ENCODE measurements at regions of chr11 and their contacts with region 1.

Region 1: DNA sequence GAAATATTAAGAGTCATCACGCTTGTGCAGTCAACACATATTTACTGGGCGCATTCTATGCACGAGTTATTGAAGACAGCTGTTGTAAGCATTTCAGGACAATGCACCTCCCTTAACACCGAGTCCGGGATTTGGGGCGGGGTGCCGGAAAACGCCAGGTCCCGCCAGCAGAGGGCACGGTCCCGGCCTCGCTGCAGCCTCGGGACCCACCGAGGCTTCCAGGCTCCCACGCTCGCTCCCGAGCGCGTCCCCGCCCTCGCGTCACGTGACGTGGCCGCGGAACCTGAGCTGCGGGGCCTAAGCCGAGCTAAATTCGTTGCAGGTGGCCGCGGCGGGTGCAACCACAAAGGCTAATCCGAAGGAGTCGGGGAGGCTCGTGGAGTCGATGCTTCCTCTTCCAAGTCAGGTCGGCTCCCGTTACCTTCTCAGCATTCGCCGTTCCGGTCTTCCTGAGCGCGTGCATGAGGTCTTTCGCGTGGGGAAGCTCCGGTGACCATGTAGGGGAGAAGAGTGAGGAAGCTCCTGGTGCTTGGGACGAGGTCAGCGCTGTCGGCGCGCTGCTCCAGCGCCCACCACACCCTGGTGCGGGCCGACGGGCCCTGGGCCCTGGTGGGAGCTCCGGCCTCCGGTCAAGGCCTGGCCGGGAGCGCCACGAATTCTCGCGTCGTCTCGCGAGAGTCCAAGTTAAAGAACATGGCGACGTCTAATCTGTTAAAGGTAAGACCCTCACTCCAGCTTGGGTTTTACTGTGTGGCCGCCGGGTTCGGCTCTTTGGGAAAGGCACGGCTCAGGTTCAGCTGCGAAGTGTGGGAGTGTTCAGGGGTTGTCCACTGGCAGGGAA is at the start of gene CUL5:
- DNase-seq: peak; percentile 95
- ATAC-seq: peak; percentile 89
- H3K4me3 Mint-ChIP-seq: peak within 1 kb of the TSS; percentile 99
- H3K27ac Mint-ChIP-seq: peak within 1 kb of the TSS; percentile 95
- H3K4me1 Mint-ChIP-seq: peaks cover 16% of the 10 kb centered on the region
- H3K27me3 Mint-ChIP-seq: no peaks in the 10 kb centered on the region
- total RNA-seq, gene CUL5: 19.7 to 34.4 TPM

Region 2: DNA sequence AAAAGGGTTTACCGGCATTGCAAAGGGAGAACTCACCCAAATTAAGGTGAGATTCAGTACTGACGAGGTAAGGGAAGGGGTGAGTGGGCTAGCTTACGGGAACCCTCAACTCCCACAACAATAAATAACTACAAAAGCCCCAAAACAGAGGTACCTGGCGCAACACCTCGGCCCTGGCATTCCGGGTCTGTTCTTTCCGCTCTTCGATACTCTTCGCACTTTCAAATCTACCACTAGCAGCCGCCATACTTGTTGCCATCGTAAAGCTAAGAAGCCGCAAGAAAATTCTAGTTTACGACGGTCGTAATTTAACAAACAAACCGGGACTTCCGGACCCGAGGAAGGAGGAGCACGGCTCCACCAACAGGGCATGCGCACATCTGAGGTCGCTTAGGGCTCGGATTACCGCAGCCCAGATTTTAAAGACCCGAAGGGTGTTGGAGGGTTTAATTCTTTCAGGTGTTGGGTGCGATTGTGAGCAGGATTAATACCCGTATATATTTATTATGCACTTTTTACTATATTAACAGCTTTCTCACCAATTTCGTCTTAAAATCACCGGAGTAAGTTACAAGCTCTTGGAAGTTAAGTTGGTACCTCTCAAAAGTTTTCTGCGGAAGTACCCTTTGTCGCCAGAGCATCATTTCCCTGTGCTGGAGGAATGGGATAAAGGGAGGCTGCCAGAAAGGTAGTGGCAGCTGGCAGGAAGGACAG is 551.2 kb before region 1 on chr11 and contains the start of gene CWF19L2:
- CTCF ChIA-PET with region 1: no interaction called
- POLR2A ChIA-PET with region 1: no interaction called
- intact Hi-C with region 1: loop called in 1 of 2 experiments (anchors 2 kb)
- DNase-seq: peak; percentile 94
- ATAC-seq: peak; percentile 99
- H3K4me3 Mint-ChIP-seq: peak within 1 kb of the TSS; percentile 84
- H3K27ac Mint-ChIP-seq: peak within 1 kb of the TSS; percentile 95
- H3K4me1 Mint-ChIP-seq: peaks cover 21% of the 10 kb centered on the region
- H3K27me3 Mint-ChIP-seq: no peaks in the 10 kb centered on the region
- total RNA-seq, gene CWF19L2: 14.1 to 14.3 TPM

Region 3: GRCh38 chr11:107928046-107928766 is 80.7 kb before region 1 on chr11 and contains the start of gene RAB39A:
- CTCF ChIA-PET with region 1: no interaction called
- POLR2A ChIA-PET with region 1: no interaction called
- intact Hi-C with region 1: loop called in 1 of 2 experiments (anchors 1 kb)
- DNase-seq: peak; percentile 84
- ATAC-seq: peak; percentile 87
- H3K4me3 Mint-ChIP-seq: peak within 1 kb of the TSS; percentile 61
- H3K27ac Mint-ChIP-seq: no peak within 1 kb of the TSS
- H3K4me1 Mint-ChIP-seq: peaks cover 12% of the 10 kb centered on the region
- H3K27me3 Mint-ChIP-seq: peaks cover 43% of the 10 kb centered on the region
- total RNA-seq, gene RAB39A: 0.12 to 0.16 TPM

Region 4: GRCh38 chr11:108069947-108070346 is 61.1 kb after region 1 on chr11:
- CTCF ChIA-PET with region 1: interaction called, 4 read pairs
- POLR2A ChIA-PET with region 1: no interaction called
- intact Hi-C with region 1: loop called in 1 of 2 experiments (anchors 2 kb)
- DNase-seq: no peak
- ATAC-seq: peak; percentile 90
- H3K4me3 Mint-ChIP-seq: no peak overlapping the region
- H3K27ac Mint-ChIP-seq: no peak overlapping the region
- H3K4me1 Mint-ChIP-seq: peaks cover 18% of the 10 kb centered on the region
- H3K27me3 Mint-ChIP-seq: no peaks in the 10 kb centered on the region

Region 5: GRCh38 chr11:108497317-108498045 is 488.6 kb after region 1 on chr11:
- CTCF ChIA-PET with region 1: no interaction called
- POLR2A ChIA-PET with region 1: no interaction called
- intact Hi-C with region 1: loop called in 1 of 2 experiments (anchors 1 kb)
- DNase-seq: peak; percentile 85
- ATAC-seq: peak; percentile 91
- H3K4me3 Mint-ChIP-seq: peak overlapping the region; percentile 81
- H3K27ac Mint-ChIP-seq: peak overlapping the region; percentile 91
- H3K4me1 Mint-ChIP-seq: peaks cover 17% of the 10 kb centered on the region
- H3K27me3 Mint-ChIP-seq: no peaks in the 10 kb centered on the region

Region 6: GRCh38 chr11:108664730-108665525 is 656.1 kb after region 1 on chr11 and contains the start of gene DDX10:
- CTCF ChIA-PET with region 1: no interaction called
- POLR2A ChIA-PET with region 1: interaction called, 3 read pairs
- intact Hi-C with region 1: loop called in 1 of 2 experiments (anchors 1 kb)
- DNase-seq: peak; percentile 99
- ATAC-seq: peak; percentile 99
- H3K4me3 Mint-ChIP-seq: peak within 1 kb of the TSS; percentile 99
- H3K27ac Mint-ChIP-seq: peak within 1 kb of the TSS; percentile 91
- H3K4me1 Mint-ChIP-seq: peaks cover 37% of the 10 kb centered on the region
- H3K27me3 Mint-ChIP-seq: no peaks in the 10 kb centered on the region
- total RNA-seq, gene DDX10: 45.8 to 50.9 TPM